Activated B cell treated with CpG ODN at 0.5 μM for 24 hours (primary cell): ENCODE measurements at regions of chr1 and their contacts with region 1.

Region 1: GRCh38 chr1:155017041-155017945 is 14.7 kb downstream of the ZBTB7B start:
- DNase-seq: peak; percentile 88
- ATAC-seq: peak; percentile 77
- H3K4me3 Mint-ChIP-seq: peak overlapping the region; percentile 79
- H3K27ac Mint-ChIP-seq: peak overlapping the region; percentile 88
- H3K4me1 Mint-ChIP-seq: peaks cover 71% of the 10 kb centered on the region
- H3K27me3 Mint-ChIP-seq: no peaks in the 10 kb centered on the region
- CTCF ChIP-seq: no peak

Region 2: GRCh38 chr1:154955718-154956543 is 61.4 kb before region 1 on chr1 and contains the start of gene PBXIP1:
- CTCF ChIA-PET with region 1: interaction called, 26 read pairs
- POLR2A ChIA-PET with region 1: interaction called, 22 read pairs
- intact Hi-C with region 1: loop called (anchors 1 kb)
- DNase-seq: peak; percentile 52
- ATAC-seq: peak; percentile 72
- H3K4me3 Mint-ChIP-seq: peak within 1 kb of the TSS; percentile 91
- H3K27ac Mint-ChIP-seq: peak within 1 kb of the TSS; percentile 93
- H3K4me1 Mint-ChIP-seq: peaks cover 81% of the 10 kb centered on the region
- H3K27me3 Mint-ChIP-seq: no peaks in the 10 kb centered on the region
- CTCF ChIP-seq: no peak
- total RNA-seq, gene PBXIP1: 42.4 and 43.2 TPM in 2 replicates

Region 3: GRCh38 chr1:154974063-154974807 is 43.1 kb before region 1 on chr1 and contains the start of gene CKS1B:
- CTCF ChIA-PET with region 1: interaction called, 12 read pairs
- POLR2A ChIA-PET with region 1: interaction called, 71 read pairs
- intact Hi-C with region 1: loop called (anchors 1 kb)
- DNase-seq: peak; percentile 87
- ATAC-seq: peak; percentile 83
- H3K4me3 Mint-ChIP-seq: no peak within 1 kb of the TSS
- H3K27ac Mint-ChIP-seq: no peak within 1 kb of the TSS
- H3K4me1 Mint-ChIP-seq: peaks cover 36% of the 10 kb centered on the region
- H3K27me3 Mint-ChIP-seq: no peaks in the 10 kb centered on the region
- CTCF ChIP-seq: no peak
- total RNA-seq, gene CKS1B: 25.3 and 26.6 TPM in 2 replicates

Region 4: DNA sequence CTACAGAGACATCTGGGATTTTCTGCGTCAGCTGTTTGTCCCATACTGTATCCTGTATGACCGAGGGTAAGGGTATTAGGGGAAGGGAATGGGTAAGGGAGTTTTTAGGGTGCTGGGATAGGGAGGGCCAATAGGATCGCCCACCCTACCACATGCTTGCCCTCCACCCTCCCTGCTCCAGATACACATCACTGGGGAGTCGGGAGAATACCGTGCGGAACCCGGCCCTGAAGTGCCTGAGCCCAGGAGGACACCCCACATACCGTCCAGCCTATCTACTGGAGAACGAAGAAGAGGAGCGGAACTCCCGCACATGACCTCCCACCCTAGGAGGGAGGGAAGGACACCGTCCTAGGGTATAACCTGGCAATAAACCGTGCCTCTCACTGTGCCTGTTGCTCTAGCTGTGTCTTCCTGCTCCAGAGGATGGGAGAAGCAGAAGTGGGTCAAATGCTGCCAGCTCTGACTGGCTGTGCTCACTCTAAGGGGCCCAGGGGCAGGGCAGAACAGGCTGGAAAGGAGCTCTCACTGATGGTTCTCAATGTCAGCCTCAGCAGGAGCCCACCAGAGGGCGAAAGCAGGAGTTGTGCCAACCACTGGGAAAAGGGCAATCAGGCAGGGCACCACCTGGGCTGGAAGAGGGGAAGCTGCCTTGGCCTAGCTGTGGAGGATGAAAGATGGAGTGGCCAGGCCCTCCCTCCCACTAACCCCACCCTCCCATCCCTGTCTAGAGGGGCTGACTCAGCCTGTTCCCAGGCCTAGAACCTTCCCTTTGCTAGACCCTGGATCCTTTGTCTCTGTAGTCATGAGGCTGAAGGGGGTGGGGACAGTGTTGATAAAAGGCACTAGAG is 24.3 kb before region 1 on chr1:
- CTCF ChIA-PET with region 1: interaction called, 14 read pairs
- POLR2A ChIA-PET with region 1: interaction called, 43 read pairs
- intact Hi-C with region 1: no loop called
- DNase-seq: no peak
- ATAC-seq: no peak
- H3K4me3 Mint-ChIP-seq: no peak overlapping the region
- H3K27ac Mint-ChIP-seq: no peak overlapping the region
- H3K4me1 Mint-ChIP-seq: peaks cover 10% of the 10 kb centered on the region
- H3K27me3 Mint-ChIP-seq: no peaks in the 10 kb centered on the region
- CTCF ChIP-seq: no peak

Region 5: DNA sequence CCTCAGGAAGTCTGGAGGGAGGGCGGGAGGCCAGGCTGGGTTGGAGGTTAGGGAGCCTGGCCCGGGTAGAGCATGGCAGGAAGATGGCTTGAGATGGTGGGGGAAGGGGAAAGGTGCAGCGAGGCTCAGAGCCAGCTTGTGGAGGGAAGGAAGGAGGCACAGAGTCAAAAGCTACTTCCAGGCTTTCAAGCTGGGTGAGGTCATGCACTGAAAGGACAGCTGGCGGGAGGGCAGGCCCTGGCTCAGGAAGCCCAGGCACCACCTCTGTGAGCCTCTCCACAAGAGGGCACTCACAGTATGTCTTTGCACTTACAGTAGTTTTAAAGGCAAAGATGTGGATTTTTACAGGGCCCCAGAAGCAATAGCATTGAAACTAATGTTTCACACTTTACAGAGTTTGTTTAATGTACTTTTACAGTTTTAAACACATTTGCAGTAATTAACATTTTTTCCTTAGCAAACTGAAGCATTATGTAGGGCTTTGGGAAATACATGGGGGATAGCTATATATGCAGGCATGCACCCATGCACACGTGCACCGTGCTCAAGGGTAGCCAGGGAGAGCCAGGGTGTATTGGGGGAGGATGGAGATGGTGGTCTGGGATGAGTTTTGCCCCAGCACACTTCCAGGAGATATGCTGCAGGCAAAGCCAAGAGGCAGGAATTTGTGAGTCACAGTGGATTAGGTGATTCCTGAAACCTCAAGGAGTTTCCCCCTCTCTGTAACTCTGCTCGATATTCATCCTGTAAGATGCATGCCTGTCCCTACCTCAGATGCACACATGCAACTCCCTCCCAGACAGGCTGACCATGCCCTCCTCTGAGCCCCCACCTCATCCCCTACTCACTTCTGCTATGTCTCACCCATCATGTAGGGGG is 27.8 kb after region 1 on chr1:
- CTCF ChIA-PET with region 1: interaction called, 13 read pairs
- POLR2A ChIA-PET with region 1: interaction called, 3 read pairs
- intact Hi-C with region 1: no loop called
- DNase-seq: peak; percentile 22
- ATAC-seq: peak; percentile 96
- H3K4me3 Mint-ChIP-seq: no peak overlapping the region
- H3K27ac Mint-ChIP-seq: no peak overlapping the region
- H3K4me1 Mint-ChIP-seq: peaks cover 4% of the 10 kb centered on the region
- H3K27me3 Mint-ChIP-seq: no peaks in the 10 kb centered on the region
- CTCF ChIP-seq: peak; percentile 58